ENCODE measurements at regions of chr20 and their contacts with region 1.

Region 1: GRCh38 chr20:31951530-31952453 is at the start of gene PDRG1:
- DNase-seq: peak; percentile 76
- ATAC-seq: peak; percentile 98
- H3K4me3 ChIP-seq: peak within 1 kb of the TSS; percentile 90
- H3K27ac ChIP-seq: peak within 1 kb of the TSS; percentile 55
- H3K4me1 ChIP-seq: peaks cover 6% of the 10 kb centered on the region
- H3K27me3 ChIP-seq: no peaks in the 10 kb centered on the region
- CTCF ChIP-seq: peak; percentile 96 to 99 (median 96); a peak in 5 of 6 replicates
- EP300 ChIP-seq: no peak
- POLR2A ChIP-seq: peak; percentile 95
- RAD21 ChIP-seq: peak; percentile 86
- polyA plus RNA-seq, gene PDRG1: 34.1 to 55.8 TPM

Region 2: DNA sequence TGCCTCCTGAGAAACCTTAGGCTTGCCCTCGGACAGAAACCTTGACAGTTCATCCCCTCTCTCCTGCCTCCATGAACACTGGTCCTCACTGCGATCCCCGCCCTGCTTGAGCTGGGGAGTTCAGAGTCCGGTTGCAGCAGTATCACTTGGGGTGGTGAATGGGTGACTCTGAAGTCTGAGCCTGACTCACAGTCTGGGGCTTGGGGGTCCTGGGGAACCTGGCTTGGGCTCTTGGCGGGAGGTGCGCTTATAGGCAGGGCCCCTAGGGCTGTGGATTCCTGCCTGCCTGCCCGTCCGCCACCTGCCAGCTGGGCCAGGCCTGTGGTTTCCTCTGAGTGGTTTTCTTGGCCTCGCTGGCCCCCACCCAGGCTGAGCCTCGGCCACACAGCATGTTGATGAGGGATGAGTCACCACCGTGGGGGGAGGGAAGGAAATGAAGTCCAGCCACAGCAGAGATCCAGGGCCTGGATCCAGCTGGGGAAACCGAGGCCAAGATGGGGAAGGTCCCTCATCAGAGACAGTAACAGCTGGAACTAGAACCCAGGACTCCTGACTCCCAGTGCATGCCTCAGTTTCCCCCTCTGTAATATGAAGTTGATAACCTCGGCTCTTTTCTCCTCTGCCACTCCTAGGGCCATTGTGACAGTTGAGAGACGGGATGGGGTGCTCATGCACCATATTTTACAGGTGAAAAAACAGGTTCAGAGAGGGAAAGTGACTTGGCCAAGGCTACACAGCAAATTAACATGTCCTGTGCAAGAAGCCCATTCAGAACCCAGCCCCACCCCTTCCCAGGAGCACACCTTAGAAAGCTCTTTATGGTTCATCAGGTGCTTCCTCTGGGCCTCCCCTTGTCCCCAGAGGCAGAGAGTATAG is 115.6 kb before region 1 on chr20:
- CTCF ChIA-PET with region 1: interaction called, 15 read pairs
- POLR2A ChIA-PET with region 1: no interaction called
- RAD21 ChIA-PET with region 1: no interaction called
- SMC1A ChIA-PET with region 1: interaction called, 3 read pairs
- in situ Hi-C with region 1: no loop called
- intact Hi-C with region 1: no loop called
- DNase-seq: peak; percentile 23
- ATAC-seq: peak; percentile 88
- H3K4me3 ChIP-seq: no peak overlapping the region
- H3K27ac ChIP-seq: no peak overlapping the region
- H3K4me1 ChIP-seq: peaks cover 8% of the 10 kb centered on the region; the same call in 1 of the 2 replicates
- H3K27me3 ChIP-seq: no peaks in the 10 kb centered on the region
- CTCF ChIP-seq: no peak
- EP300 ChIP-seq: no peak
- POLR2A ChIP-seq: no peak
- RAD21 ChIP-seq: no peak

Region 3: GRCh38 chr20:31856516-31856915 is 95.3 kb before region 1 on chr20:
- CTCF ChIA-PET with region 1: interaction called, 307 read pairs
- POLR2A ChIA-PET with region 1: interaction called, 10 read pairs
- RAD21 ChIA-PET with region 1: interaction called, 248 read pairs
- SMC1A ChIA-PET with region 1: interaction called, 181 read pairs
- in situ Hi-C with region 1: loop called (anchors 5 kb)
- intact Hi-C with region 1: loop called (anchors 1 kb)
- DNase-seq: no peak
- ATAC-seq: no peak
- H3K4me3 ChIP-seq: no peak overlapping the region
- H3K27ac ChIP-seq: no peak overlapping the region
- H3K4me1 ChIP-seq: peaks cover 10% of the 10 kb centered on the region
- H3K27me3 ChIP-seq: peaks cover 0 to 6% of the 10 kb centered on the region in 2 experiments; a peak in 1 of 4 replicates
- CTCF ChIP-seq: no peak
- EP300 ChIP-seq: no peak
- POLR2A ChIP-seq: no peak
- RAD21 ChIP-seq: no peak

Region 4: GRCh38 chr20:31869942-31870725 is 81.7 kb before region 1 on chr20 and contains the starts of genes DUSP15 and TTLL9:
- CTCF ChIA-PET with region 1: interaction called, 26 read pairs
- POLR2A ChIA-PET with region 1: interaction called, 3 read pairs
- RAD21 ChIA-PET with region 1: interaction called, 26 read pairs
- SMC1A ChIA-PET with region 1: interaction called, 16 read pairs
- in situ Hi-C with region 1: no loop called
- intact Hi-C with region 1: no loop called
- DNase-seq: no peak
- ATAC-seq: peak; percentile 65
- H3K4me3 ChIP-seq: peak within 1 kb of the TSS; percentile 41; the same call in 1 of the 2 replicates
- H3K27ac ChIP-seq: no peak within 1 kb of the TSS
- H3K4me1 ChIP-seq: peaks cover 13% of the 10 kb centered on the region
- H3K27me3 ChIP-seq: peaks cover 6 to 13% of the 10 kb centered on the region in 2 experiments
- CTCF ChIP-seq: no peak
- EP300 ChIP-seq: no peak
- POLR2A ChIP-seq: peak; percentile 25; the same call in 1 of the 2 replicates
- RAD21 ChIP-seq: no peak
- polyA plus RNA-seq, gene DUSP15: 0.06 TPM in 1 of 2 experiments, not detected in the other
- polyA plus RNA-seq, gene TTLL9: 0.03 TPM in 1 of 2 experiments, not detected in the other

Region 5: GRCh38 chr20:31918466-31919105 is 33.2 kb before region 1 on chr20:
- CTCF ChIA-PET with region 1: interaction called, 23 read pairs
- POLR2A ChIA-PET with region 1: interaction called, 4 read pairs
- RAD21 ChIA-PET with region 1: interaction called, 12 read pairs
- SMC1A ChIA-PET with region 1: interaction called, 14 read pairs
- in situ Hi-C with region 1: no loop called
- intact Hi-C with region 1: no loop called
- DNase-seq: no peak
- ATAC-seq: no peak
- H3K4me3 ChIP-seq: no peak overlapping the region
- H3K27ac ChIP-seq: no peak overlapping the region
- H3K4me1 ChIP-seq: peaks cover 5% of the 10 kb centered on the region
- H3K27me3 ChIP-seq: no peaks in the 10 kb centered on the region
- CTCF ChIP-seq: no peak
- EP300 ChIP-seq: no peak
- POLR2A ChIP-seq: no peak
- RAD21 ChIP-seq: no peak

Region 6: GRCh38 chr20:31930779-31931178 is 21.0 kb before region 1 on chr20:
- CTCF ChIA-PET with region 1: interaction called, 14 read pairs
- POLR2A ChIA-PET with region 1: interaction called, 3 read pairs
- RAD21 ChIA-PET with region 1: interaction called, 5 read pairs
- SMC1A ChIA-PET with region 1: interaction called, 6 read pairs
- in situ Hi-C with region 1: no loop called
- intact Hi-C with region 1: no loop called
- DNase-seq: no peak
- ATAC-seq: no peak
- H3K4me3 ChIP-seq: no peak overlapping the region
- H3K27ac ChIP-seq: no peak overlapping the region
- H3K4me1 ChIP-seq: no peaks in the 10 kb centered on the region
- H3K27me3 ChIP-seq: no peaks in the 10 kb centered on the region
- CTCF ChIP-seq: no peak
- EP300 ChIP-seq: no peak
- POLR2A ChIP-seq: no peak
- RAD21 ChIP-seq: no peak

Measured in GM12878 (cell line).